ENCODE measurements at regions of chr14 and their contacts with region 1.

Region 1: GRCh38 chr14:99809360-99809759 is 16.1 kb downstream of the EML1 start:
- DNase-seq: peak; percentile 59 to 84
- H3K4me3 ChIP-seq: no peak overlapping the region
- H3K27ac ChIP-seq: peak overlapping the region; percentile 46 to 65
- H3K4me1 ChIP-seq: peaks cover 0 to 14% (median 4%) of the 10 kb centered on the region in 4 donors
- H3K27me3 ChIP-seq: no peaks in the 10 kb centered on the region
- CTCF ChIP-seq: no peak

Region 2: GRCh38 chr14:99879401-99880295 is 70.3 kb after region 1 on chr14:
- intact Hi-C with region 1: loop called (anchors 5 kb)
- DNase-seq: no peak
- H3K4me3 ChIP-seq: no peak overlapping the region
- H3K27ac ChIP-seq: peak overlapping the region; percentile 20 to 36
- H3K4me1 ChIP-seq: peaks cover 0 to 23% (median 9%) of the 10 kb centered on the region in 4 donors
- H3K27me3 ChIP-seq: no peaks in the 10 kb centered on the region
- CTCF ChIP-seq: no peak

Region 3: DNA sequence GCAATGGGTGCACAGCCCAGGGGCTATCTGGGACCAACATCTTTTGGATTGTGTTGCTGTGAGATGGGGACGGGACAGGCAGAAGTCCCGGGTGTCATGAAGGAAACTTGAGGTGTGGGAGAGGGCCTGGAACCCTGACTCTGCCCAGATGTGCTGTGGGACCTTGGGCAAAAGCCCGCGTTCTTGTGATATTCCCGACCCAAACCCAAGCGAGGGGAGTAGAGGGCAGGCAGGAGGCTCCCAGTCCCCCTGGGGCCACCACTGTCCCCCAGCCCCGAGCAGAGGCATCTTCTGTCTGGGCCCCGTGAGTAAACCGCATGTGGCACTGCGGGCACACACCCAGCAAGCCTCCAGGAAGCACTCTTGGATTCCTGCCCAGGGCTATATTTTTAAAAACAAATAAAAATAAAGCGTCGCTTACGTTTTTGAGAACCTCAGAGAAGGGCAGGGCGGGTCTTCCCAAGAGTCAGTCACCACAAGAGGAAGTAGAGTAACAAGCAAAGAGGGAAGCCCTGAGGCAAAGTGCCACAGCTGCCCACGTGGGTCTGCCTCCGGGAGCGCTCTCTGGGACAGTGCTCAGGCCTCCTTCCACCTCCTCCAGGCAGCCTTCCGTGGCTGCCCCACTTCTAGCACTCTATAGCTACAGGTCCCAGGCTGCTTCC is 738.4 kb after region 1 on chr14:
- intact Hi-C with region 1: no loop called
- DNase-seq: peak; percentile 67 to 77
- H3K4me3 ChIP-seq: no peak overlapping the region
- H3K27ac ChIP-seq: no peak overlapping the region
- H3K4me1 ChIP-seq: peaks cover 0 to 15% (median 8%) of the 10 kb centered on the region in 4 donors
- H3K27me3 ChIP-seq: peaks cover 0 to 12% of the 10 kb centered on the region in 2 donors
- CTCF ChIP-seq: no peak